ENCODE measurements at regions of chr1 and their contacts with region 1.

Region 1: GRCh38 chr1:74468982-74469603 is 43.3 kb downstream of the LRRC53 start:
- DNase-seq: peak; percentile 26
- H3K4me3 ChIP-seq: no peak overlapping the region
- H3K27ac ChIP-seq: no peak overlapping the region
- H3K27me3 ChIP-seq: no peaks in the 10 kb centered on the region
- CTCF ChIP-seq: peak; percentile 71

Region 2: GRCh38 chr1:73839922-73840321 is 629.2 kb before region 1 on chr1:
- CTCF ChIA-PET with region 1: interaction called, 11 read pairs
- POLR2A ChIA-PET with region 1: no interaction called
- DNase-seq: no peak
- H3K4me3 ChIP-seq: no peak overlapping the region
- H3K27ac ChIP-seq: no peak overlapping the region
- H3K27me3 ChIP-seq: no peaks in the 10 kb centered on the region
- CTCF ChIP-seq: peak; percentile 45

Region 3: DNA sequence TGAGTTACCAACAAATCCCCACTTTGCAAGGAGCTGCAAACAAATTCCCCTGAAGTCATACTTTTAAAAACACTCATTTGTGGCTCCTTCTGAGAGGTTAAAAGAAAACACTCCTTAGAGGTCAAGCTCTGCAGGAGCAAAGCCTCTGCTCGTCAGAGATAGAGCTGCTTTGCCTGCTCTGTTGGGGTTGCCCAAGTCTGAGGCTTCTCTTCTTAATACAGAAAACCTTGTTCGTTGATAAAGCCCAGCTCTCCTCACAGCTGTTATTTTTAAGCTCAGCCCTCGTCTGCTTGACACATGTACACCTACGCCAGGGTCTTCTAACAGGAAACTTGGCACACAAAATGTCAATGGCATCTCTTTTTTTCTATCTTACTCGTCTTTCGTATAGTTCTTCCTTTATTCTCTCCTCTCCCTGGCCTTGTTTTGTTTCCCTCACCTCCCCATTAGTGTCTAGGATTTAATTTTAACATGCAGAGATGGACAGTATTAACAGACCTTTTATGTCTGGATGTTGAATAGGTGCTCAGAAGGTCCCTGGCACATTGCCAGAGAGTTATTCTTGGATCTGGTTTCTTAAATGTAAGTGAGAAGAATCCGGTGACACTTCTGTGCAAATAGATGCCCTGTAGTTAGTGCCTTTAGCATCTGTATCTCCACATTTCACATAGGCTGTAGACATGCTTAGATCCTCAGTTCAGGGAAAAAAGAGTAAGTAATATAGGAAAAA is 42.7 kb before region 1 on chr1:
- CTCF ChIA-PET with region 1: interaction called, 17 read pairs
- POLR2A ChIA-PET with region 1: no interaction called
- DNase-seq: no peak
- H3K4me3 ChIP-seq: peak overlapping the region; percentile 35
- H3K27ac ChIP-seq: peak overlapping the region; percentile 59
- H3K27me3 ChIP-seq: no peaks in the 10 kb centered on the region
- CTCF ChIP-seq: no peak

Region 4: GRCh38 chr1:74457253-74457652 is 11.8 kb before region 1 on chr1:
- CTCF ChIA-PET with region 1: interaction called, 19 read pairs
- POLR2A ChIA-PET with region 1: no interaction called
- DNase-seq: no peak
- H3K4me3 ChIP-seq: no peak overlapping the region
- H3K27ac ChIP-seq: no peak overlapping the region
- H3K27me3 ChIP-seq: no peaks in the 10 kb centered on the region
- CTCF ChIP-seq: no peak

Region 5: GRCh38 chr1:74504125-74504932 is 35.2 kb after region 1 on chr1:
- CTCF ChIA-PET with region 1: interaction called, 16 read pairs
- POLR2A ChIA-PET with region 1: no interaction called
- DNase-seq: peak; percentile 13
- H3K4me3 ChIP-seq: no peak overlapping the region
- H3K27ac ChIP-seq: no peak overlapping the region
- H3K27me3 ChIP-seq: no peaks in the 10 kb centered on the region
- CTCF ChIP-seq: peak; percentile 99

Measured in AG04450 (cell line).